Activated CD4-positive, alpha-beta T cell treated with anti-CD3 and anti-CD28 coated beads for 36 hours (primary cell): ENCODE measurements at regions of chr18 and their contacts with region 1.

Region 1: GRCh38 chr18:50240083-50240563 is 26.2 kb downstream of the CFAP53 start:
- DNase-seq: peak; percentile 25
- ATAC-seq: peak; percentile 70
- H3K4me3 Mint-ChIP-seq: no peak overlapping the region
- H3K27ac Mint-ChIP-seq: no peak overlapping the region
- H3K4me1 Mint-ChIP-seq: peaks cover 7% of the 10 kb centered on the region
- H3K27me3 Mint-ChIP-seq: peaks cover 2% of the 10 kb centered on the region

Region 2: DNA sequence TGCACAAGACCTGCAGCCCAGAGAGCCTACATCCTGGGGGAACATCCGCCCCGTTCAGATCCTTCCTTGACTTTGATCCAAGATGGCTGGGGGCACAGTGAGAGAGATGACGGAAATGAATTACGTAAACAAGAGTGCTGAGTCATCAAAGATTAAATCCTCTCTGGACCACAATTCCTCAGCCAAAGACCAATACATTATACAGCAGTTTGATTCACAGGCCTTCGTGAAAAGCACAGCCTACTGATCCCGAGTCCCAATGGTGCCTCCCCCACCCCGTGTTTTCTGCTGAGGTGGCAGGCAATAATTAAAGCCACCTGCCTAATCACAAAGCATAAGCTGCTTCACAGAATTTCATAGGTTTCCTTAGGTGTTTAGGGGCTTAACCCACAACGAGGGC is 88.2 kb before region 1 on chr18:
- CTCF ChIA-PET with region 1: no interaction called
- POLR2A ChIA-PET with region 1: no interaction called
- intact Hi-C with region 1: no loop called
- DNase-seq: no peak
- ATAC-seq: no peak
- H3K4me3 Mint-ChIP-seq: no peak overlapping the region
- H3K27ac Mint-ChIP-seq: no peak overlapping the region
- H3K4me1 Mint-ChIP-seq: no peaks in the 10 kb centered on the region
- H3K27me3 Mint-ChIP-seq: peaks cover 11% of the 10 kb centered on the region

Region 3: DNA sequence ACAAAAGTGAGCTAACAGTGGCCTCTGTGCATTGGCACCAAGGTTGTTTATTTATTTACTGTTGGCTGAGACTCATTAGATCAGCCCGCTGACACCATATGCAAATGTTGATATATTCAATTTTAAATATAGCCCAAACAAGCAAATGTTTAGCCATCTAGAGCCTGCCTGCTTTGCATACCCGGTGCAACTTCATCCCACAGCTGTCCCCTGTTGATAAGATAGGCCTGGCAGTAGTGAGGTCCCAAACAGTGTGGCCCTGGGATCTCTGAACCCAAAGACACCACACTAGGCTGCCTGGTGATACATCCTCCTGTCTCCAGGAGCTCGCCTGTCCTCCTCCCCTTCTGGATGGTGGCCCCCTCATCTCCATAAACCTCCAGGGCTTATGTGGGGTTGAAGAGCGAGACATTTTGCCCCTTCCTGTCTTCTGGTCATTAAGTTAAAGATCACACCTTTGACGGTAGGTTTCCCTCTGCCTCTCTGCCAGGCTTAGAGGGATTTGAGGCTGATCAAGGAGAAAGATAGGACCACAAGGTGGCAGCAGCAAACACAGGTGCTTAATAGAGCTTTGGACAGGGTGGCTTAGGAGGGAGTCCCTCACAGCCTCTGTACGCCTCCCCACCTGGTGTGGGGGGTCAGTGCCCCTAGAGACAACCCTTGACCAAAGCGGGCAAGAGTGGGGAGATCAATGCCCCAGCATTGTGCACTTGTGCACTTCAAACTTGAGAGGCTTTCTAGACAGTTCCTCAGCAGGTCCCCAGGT is 21.5 kb before region 1 on chr18:
- CTCF ChIA-PET with region 1: interaction called, 3 read pairs
- POLR2A ChIA-PET with region 1: no interaction called
- intact Hi-C with region 1: loop called in 1 of 2 experiments (anchors 1 kb)
- DNase-seq: peak; percentile 57
- ATAC-seq: peak; percentile 55
- H3K4me3 Mint-ChIP-seq: no peak overlapping the region
- H3K27ac Mint-ChIP-seq: no peak overlapping the region
- H3K4me1 Mint-ChIP-seq: no peaks in the 10 kb centered on the region
- H3K27me3 Mint-ChIP-seq: peaks cover 19% of the 10 kb centered on the region